Mammary epithelial cell (primary cell): ENCODE measurements at regions of chrX and their contacts with region 1.

Region 1: DNA sequence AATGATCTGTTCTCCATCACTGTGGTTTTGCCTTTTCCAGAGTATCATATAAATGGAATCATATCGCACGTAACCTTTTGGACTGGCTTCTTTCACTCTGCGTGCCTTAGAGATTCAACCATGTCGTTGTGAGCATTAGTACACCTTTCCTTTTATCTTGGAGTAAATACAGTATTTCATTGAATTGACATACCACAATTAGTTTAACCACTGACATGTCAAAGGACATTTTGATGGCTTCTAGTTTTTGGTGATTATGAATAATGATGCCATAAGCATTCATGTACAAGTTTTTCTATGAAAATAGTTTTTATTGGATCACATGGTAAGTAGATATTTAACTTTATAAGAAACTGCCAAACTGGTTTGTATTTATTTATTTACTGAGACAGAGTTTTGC is 35.2 kb downstream of the DDX3X start:
- DNase-seq: no peak
- H3K4me3 ChIP-seq: no peak overlapping the region
- H3K27ac ChIP-seq: no peak overlapping the region
- H3K4me1 ChIP-seq: no peaks in the 10 kb centered on the region
- H3K27me3 ChIP-seq: peaks cover under 1% of the 10 kb centered on the region
- CTCF ChIP-seq: no peak

Region 2: GRCh38 chrX:39665830-39666518 is 1703.2 kb before region 1 on chrX:
- CTCF ChIA-PET with region 1: interaction called, 21 read pairs
- dilution Hi-C with region 1: no loop called
- in situ Hi-C with region 1: no loop called
- intact Hi-C with region 1: no loop called
- DNase-seq: no peak
- H3K4me3 ChIP-seq: no peak overlapping the region
- H3K27ac ChIP-seq: no peak overlapping the region
- H3K4me1 ChIP-seq: no peaks in the 10 kb centered on the region
- H3K27me3 ChIP-seq: no peaks in the 10 kb centered on the region
- CTCF ChIP-seq: no peak

Region 3: DNA sequence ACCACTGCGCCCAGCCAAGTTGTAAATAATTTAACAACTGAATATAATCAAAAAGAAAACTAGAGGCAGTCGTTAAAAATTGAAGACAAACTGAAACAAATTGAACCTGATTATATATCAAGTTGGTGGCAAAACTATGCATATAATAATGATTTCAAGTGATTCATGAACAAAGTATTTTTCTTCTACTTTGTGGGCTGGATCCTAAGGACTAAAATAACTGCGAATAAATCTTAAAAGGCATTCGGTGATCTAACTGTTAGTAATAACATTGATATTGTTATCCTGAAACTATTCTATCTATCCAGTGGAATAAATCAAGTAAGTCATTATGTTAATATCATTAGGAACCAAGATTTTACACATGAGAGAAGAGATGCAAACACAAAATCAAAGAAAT is 305.1 kb before region 1 on chrX:
- CTCF ChIA-PET with region 1: no interaction called
- dilution Hi-C with region 1: no loop called
- in situ Hi-C with region 1: no loop called
- intact Hi-C with region 1: no loop called
- DNase-seq: peak; percentile 31
- H3K4me3 ChIP-seq: no peak overlapping the region
- H3K27ac ChIP-seq: no peak overlapping the region
- H3K4me1 ChIP-seq: no peaks in the 10 kb centered on the region
- H3K27me3 ChIP-seq: no peaks in the 10 kb centered on the region
- CTCF ChIP-seq: no peak